CD8-positive, alpha-beta T cell (primary cell): ENCODE measurements at regions of chr22 and their contacts with region 1.

Region 1: DNA sequence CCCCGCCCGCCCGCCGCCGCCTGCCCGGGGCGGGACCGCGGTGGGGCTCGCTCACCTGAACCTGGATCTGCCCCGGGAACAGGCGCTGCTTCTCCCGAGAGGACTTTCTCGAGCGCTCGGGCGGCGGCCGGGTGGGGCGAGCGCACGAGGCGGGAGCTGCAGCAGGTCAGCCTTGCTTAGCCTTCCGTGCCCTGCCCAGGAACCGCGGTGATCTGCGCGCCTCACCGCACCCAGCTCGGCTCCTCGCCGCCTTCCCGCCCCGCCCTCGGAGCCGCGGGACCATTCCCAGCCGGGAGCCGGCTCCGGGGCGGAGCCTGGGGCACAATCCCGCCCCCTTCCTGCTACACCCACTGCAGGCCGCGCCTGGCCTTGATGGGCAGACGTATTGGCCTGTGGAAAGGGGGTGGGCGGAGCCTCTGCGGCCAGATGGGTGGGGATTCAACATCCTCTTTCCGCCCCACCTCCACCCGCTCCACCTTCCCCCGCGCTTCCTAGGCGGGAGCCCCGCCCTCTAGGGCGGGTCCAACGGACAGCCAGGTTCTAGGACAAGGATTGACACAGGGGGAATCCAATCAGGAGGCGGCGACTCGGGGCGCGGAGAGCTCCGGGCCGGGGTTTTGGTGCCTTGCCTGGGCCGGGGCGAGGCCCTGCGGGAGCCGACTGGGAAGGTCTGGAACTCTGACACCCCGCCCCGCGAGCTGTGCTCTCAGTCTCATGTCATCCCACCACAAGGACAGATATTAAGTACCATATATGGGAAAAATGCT is at the start of gene MYH9:
- DNase-seq: peak; percentile 96 to 100 (median 99)
- ATAC-seq: peak; percentile 77
- H3K4me3 ChIP-seq: peak within 1 kb of the TSS; percentile 88 to 94
- H3K4me3 Mint-ChIP-seq: peak within 1 kb of the TSS; percentile 94
- H3K27ac ChIP-seq: peak within 1 kb of the TSS; percentile 79 to 82
- H3K27ac Mint-ChIP-seq: peak within 1 kb of the TSS; percentile 95
- H3K4me1 ChIP-seq: peaks cover 27% of the 10 kb centered on the region
- H3K4me1 Mint-ChIP-seq: peaks cover 43% of the 10 kb centered on the region
- H3K27me3 ChIP-seq: no peaks in the 10 kb centered on the region
- H3K27me3 Mint-ChIP-seq: no peaks in the 10 kb centered on the region
- CTCF ChIP-seq: no peak
- total RNA-seq, gene MYH9: 703 to 757 TPM

Region 2: DNA sequence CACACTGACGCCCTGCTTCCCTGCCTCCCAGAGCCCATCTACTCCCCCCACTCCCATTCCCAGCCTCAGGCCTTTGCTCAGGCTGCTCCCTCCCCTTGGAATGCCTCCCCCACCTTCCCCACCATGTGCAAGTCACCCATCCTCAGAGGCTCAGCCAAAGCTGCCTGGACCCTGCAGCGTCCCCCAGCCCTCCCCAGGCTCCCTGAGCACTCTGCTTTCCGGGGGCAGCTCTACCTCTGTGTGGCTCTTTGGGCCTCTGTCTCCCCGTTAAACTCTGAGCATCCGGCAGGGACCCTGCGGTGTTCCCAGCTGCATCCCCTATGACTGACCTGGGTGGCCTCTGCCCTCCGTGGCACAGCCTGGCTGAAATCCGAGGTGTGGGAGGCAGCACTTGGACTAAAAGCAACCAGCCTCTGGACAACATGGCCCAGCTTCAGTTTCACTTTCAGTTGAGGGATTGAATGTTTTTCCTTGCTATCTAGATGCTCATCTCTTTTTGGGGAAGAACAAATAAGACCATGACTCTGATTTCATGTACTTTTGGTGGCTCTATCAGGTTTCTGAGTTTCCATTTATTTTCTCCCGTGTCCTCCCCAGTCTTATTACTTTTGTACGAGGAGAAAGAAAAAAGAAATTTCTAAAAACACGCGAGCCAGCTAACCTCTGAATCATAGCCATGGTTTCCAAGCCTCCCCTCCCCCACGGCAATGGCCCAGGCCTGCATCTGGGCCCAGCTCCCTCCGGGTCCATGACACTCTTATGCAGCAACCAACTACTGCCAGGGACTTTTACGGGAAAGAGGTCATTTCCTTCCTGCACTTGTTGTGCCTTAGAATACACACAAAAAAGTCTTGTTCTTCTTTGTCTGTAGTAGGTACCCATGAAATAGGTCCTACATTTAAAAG is 231.2 kb before region 1 on chr22:
- CTCF ChIA-PET with region 1: no interaction called
- POLR2A ChIA-PET with region 1: no interaction called
- intact Hi-C with region 1: loop called in 1 of 2 experiments (anchors 5 kb)
- DNase-seq: peak; percentile 36 to 90 (median 80)
- ATAC-seq: peak; percentile 46
- H3K4me3 ChIP-seq: peak overlapping the region; percentile 86 to 91
- H3K4me3 Mint-ChIP-seq: peak overlapping the region; percentile 97
- H3K27ac ChIP-seq: peak overlapping the region; percentile 77 to 96
- H3K27ac Mint-ChIP-seq: peak overlapping the region; percentile 99
- H3K4me1 ChIP-seq: peaks cover 62% of the 10 kb centered on the region
- H3K4me1 Mint-ChIP-seq: peaks cover 90% of the 10 kb centered on the region
- H3K27me3 ChIP-seq: no peaks in the 10 kb centered on the region
- H3K27me3 Mint-ChIP-seq: no peaks in the 10 kb centered on the region
- CTCF ChIP-seq: no peak

Region 3: DNA sequence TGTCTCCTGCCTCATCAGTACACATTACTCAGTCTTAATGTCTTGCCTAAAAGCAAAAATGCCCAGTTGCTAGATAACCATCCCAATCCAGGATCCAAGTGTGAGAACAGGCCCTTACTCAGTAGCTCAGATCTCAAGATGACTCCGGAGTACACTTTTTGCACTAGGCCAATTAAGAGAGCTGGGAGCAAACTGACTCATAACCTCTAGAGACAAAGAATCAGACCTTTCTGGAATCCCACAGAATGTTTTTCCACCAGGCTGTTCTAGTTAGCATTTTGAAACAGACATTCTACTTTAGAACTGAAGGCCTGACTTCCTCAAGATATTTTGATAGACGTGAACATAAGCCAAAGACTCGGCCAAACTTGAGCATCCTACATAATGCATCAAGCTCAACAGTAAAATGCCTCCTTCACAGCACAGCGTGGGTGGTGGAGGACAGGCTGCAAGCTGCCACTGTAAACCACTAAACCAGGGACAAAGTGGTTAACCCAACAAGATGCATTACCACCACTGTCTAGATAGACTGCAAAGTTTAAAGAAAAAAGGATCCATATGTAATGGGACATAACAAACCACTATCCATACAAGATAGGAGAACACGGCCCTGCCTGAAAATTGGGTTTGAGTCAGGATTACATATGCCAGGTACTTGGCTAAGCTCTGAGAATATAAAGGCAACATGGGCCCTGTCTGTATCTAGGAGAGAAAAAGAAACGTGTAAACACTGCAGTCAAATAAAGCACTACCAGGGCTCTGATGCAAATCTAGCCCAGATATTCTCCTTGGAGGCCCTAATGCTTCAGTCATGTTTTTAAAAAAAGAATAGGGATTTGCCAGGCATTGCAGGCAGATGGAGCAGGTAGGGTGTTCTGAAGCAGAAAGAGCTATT is 48.5 kb before region 1 on chr22:
- CTCF ChIA-PET with region 1: interaction called, 10 read pairs
- POLR2A ChIA-PET with region 1: interaction called, 124 read pairs
- intact Hi-C with region 1: no loop called
- DNase-seq: peak in 2 of 9 experiments; percentile 44 to 50
- ATAC-seq: peak; percentile 12
- H3K4me3 ChIP-seq: no peak overlapping the region
- H3K4me3 Mint-ChIP-seq: peak overlapping the region; percentile 64
- H3K27ac ChIP-seq: peak overlapping the region in 1 of 2 experiments; percentile 55
- H3K27ac Mint-ChIP-seq: peak overlapping the region; percentile 92
- H3K4me1 ChIP-seq: peaks cover 98% of the 10 kb centered on the region
- H3K4me1 Mint-ChIP-seq: peaks cover 92% of the 10 kb centered on the region
- H3K27me3 ChIP-seq: no peaks in the 10 kb centered on the region
- H3K27me3 Mint-ChIP-seq: no peaks in the 10 kb centered on the region
- CTCF ChIP-seq: no peak

Region 4: GRCh38 chr22:36365020-36365411 is 22.9 kb before region 1 on chr22:
- CTCF ChIA-PET with region 1: interaction called, 21 read pairs
- POLR2A ChIA-PET with region 1: interaction called, 78 read pairs
- intact Hi-C with region 1: loop called (anchors 1 kb)
- DNase-seq: peak; percentile 70 to 98 (median 84)
- ATAC-seq: peak; percentile 86
- H3K4me3 ChIP-seq: no peak overlapping the region
- H3K4me3 Mint-ChIP-seq: peak overlapping the region; percentile 68
- H3K27ac ChIP-seq: peak overlapping the region; percentile 57 to 86
- H3K27ac Mint-ChIP-seq: peak overlapping the region; percentile 95
- H3K4me1 ChIP-seq: peaks cover 98% of the 10 kb centered on the region
- H3K4me1 Mint-ChIP-seq: peaks cover 94% of the 10 kb centered on the region
- H3K27me3 ChIP-seq: no peaks in the 10 kb centered on the region
- H3K27me3 Mint-ChIP-seq: no peaks in the 10 kb centered on the region
- CTCF ChIP-seq: no peak

Region 5: GRCh38 chr22:36439481-36440271 is 51.7 kb after region 1 on chr22:
- CTCF ChIA-PET with region 1: interaction called, 3 read pairs
- POLR2A ChIA-PET with region 1: interaction called, 3 read pairs
- intact Hi-C with region 1: loop called in 1 of 2 experiments (anchors 5 kb)
- DNase-seq: no peak
- ATAC-seq: no peak
- H3K4me3 ChIP-seq: no peak overlapping the region
- H3K4me3 Mint-ChIP-seq: no peak overlapping the region
- H3K27ac ChIP-seq: no peak overlapping the region
- H3K27ac Mint-ChIP-seq: no peak overlapping the region
- H3K4me1 ChIP-seq: peaks cover 40% of the 10 kb centered on the region
- H3K4me1 Mint-ChIP-seq: peaks cover 35% of the 10 kb centered on the region
- H3K27me3 ChIP-seq: no peaks in the 10 kb centered on the region
- H3K27me3 Mint-ChIP-seq: no peaks in the 10 kb centered on the region
- CTCF ChIP-seq: no peak

Region 6: GRCh38 chr22:36481393-36482168 is 93.6 kb after region 1 on chr22 and contains the start of gene TXN2:
- CTCF ChIA-PET with region 1: no interaction called
- POLR2A ChIA-PET with region 1: interaction called, 4 read pairs
- intact Hi-C with region 1: loop called (anchors 1 kb)
- DNase-seq: peak; percentile 91 to 99 (median 97)
- ATAC-seq: peak; percentile 85
- H3K4me3 ChIP-seq: peak within 1 kb of the TSS; percentile 68
- H3K4me3 Mint-ChIP-seq: peak within 1 kb of the TSS; percentile 95
- H3K27ac ChIP-seq: peak within 1 kb of the TSS; percentile 77 to 99
- H3K27ac Mint-ChIP-seq: peak within 1 kb of the TSS; percentile 97
- H3K4me1 ChIP-seq: peaks cover 13% of the 10 kb centered on the region
- H3K4me1 Mint-ChIP-seq: peaks cover 16% of the 10 kb centered on the region
- H3K27me3 ChIP-seq: no peaks in the 10 kb centered on the region
- H3K27me3 Mint-ChIP-seq: no peaks in the 10 kb centered on the region
- CTCF ChIP-seq: no peak
- total RNA-seq, gene TXN2: 24.4 to 29.0 TPM